PC-3 (cell line): ENCODE measurements at regions of chr3 and their contacts with region 1.

Region 1: DNA sequence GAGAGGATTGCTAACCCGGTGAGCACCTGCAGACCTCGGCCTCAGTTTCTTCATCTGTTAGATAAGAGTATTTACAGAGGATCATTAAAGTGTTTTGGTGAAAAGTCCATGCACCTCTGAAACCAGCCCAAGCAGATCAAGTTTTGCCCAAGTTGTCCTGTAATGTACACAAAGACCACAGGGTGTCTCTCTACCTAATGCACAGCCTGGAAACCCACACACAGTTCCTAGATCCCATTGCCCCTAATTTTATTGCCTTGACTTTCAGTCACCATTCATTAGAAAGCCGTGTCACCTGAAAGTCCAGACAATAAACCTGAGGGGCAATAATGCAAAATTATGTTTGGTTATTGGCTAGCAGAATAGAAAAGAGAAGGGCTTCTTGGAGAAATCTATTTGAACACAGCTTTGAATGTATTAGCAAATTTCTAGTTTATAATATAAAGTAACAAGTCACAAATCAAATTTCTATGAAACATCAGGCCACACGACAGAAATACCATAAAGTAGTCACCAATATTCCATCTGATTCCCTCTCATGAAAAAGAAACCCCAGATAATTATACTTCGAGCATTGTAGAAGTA is 161.3 kb upstream of the SLC2A2 start:
- DNase-seq: peak; percentile 61
- ATAC-seq: peak; percentile 41; the same call in 1 of the 2 replicates
- H3K4me3 ChIP-seq: no peak overlapping the region
- H3K27ac ChIP-seq: no peak overlapping the region
- H3K4me1 ChIP-seq: peaks cover 26% of the 10 kb centered on the region
- H3K27me3 ChIP-seq: no peaks in the 10 kb centered on the region
- CTCF ChIP-seq: peak; percentile 85

Region 2: DNA sequence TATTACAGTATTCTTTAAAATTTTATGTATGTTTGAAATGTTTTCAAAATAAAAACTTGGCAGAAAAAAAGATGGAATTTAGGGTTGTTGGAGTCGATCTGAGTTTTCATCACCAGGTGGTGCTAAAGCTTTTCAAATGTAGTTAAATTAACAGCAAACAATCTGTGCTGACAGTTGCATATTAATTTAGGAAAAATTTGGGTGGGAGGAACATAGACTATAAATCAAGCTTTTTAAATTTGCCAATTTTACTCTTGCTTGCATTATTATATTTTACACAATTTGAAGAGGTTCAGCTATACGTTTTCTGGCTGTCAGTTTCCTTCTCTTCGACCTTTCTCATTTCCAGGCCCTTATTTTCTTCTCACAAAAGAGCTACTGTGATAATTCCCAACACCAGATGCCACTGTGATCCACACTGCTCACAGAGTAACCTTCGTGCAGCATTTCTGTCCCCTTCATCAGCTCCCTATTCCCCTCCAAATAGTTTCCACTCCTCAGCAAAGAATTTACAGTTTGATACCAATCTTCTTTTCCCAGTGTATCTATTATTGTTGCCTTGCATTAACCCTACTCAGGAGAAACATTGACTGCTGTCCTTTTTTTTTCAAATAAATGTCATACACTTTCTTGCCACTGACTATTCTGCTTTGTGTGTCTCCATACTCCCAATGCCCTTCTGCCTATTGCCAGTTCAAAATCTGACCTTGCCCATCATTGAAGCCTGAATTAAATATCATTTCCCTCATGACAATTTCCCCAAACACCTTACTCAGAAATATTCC is 226.0 kb before region 1 on chr3:
- CTCF ChIA-PET with region 1: interaction called, 11 read pairs
- POLR2A ChIA-PET with region 1: no interaction called
- intact Hi-C with region 1: loop called (anchors 1 kb)
- DNase-seq: peak; percentile 74
- ATAC-seq: peak; percentile 55
- H3K4me3 ChIP-seq: no peak overlapping the region
- H3K27ac ChIP-seq: no peak overlapping the region
- H3K4me1 ChIP-seq: no peaks in the 10 kb centered on the region
- H3K27me3 ChIP-seq: no peaks in the 10 kb centered on the region
- CTCF ChIP-seq: peak; percentile 91

Region 3: DNA sequence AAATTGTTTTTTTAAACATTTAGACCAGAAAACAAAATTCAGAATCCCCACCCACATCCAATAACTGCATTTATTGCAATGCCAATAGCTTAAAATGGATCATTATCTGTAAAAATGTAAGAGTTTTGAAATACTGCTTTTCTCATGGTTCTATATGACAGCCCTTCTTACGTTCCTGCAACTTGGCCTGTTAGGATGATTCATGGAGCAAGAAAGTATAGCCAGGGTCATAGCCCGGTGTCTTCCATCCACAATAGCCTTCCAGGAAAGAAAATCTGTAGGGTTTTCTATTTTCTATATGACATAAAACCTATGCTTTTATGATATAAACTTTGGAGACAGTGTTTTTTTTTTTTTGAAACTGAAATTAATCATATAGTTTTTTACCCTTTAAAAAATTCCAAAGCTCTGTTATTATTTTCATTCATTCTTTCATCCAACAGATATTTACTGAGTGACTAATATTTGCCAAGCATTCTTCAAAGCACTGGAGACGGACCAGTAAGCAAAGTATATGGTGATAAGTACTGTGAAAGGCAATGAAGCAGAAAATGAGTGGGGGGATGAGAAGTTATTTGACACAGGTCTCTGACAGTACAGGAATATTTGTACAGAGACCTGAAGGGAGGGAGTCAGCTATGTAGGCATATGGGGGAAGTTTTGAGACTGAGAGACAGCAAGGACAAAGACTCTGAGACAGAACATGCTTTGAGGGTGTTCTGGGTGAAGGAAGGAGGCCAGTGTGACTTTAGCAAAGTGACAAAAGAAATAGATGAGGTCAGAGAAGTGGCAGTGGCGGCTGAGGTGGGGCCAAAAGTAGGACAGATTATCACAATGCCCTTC is 132.2 kb before region 1 on chr3:
- CTCF ChIA-PET with region 1: no interaction called
- POLR2A ChIA-PET with region 1: no interaction called
- intact Hi-C with region 1: loop called (anchors 1 kb)
- DNase-seq: peak; percentile 94
- ATAC-seq: peak; percentile 78
- H3K4me3 ChIP-seq: peak overlapping the region; percentile 18; the same call in 1 of the 2 replicates
- H3K27ac ChIP-seq: peak overlapping the region; percentile 88
- H3K4me1 ChIP-seq: peaks cover 31% of the 10 kb centered on the region
- H3K27me3 ChIP-seq: no peaks in the 10 kb centered on the region
- CTCF ChIP-seq: no peak

Region 4: GRCh38 chr3:171206283-171206682 is 18.5 kb after region 1 on chr3:
- CTCF ChIA-PET with region 1: no interaction called
- POLR2A ChIA-PET with region 1: no interaction called
- intact Hi-C with region 1: no loop called
- DNase-seq: no peak
- ATAC-seq: peak; percentile 46; the same call in 1 of the 2 replicates
- H3K4me3 ChIP-seq: no peak overlapping the region
- H3K27ac ChIP-seq: no peak overlapping the region
- H3K4me1 ChIP-seq: peaks cover 13% of the 10 kb centered on the region
- H3K27me3 ChIP-seq: no peaks in the 10 kb centered on the region
- CTCF ChIP-seq: no peak

Region 5: DNA sequence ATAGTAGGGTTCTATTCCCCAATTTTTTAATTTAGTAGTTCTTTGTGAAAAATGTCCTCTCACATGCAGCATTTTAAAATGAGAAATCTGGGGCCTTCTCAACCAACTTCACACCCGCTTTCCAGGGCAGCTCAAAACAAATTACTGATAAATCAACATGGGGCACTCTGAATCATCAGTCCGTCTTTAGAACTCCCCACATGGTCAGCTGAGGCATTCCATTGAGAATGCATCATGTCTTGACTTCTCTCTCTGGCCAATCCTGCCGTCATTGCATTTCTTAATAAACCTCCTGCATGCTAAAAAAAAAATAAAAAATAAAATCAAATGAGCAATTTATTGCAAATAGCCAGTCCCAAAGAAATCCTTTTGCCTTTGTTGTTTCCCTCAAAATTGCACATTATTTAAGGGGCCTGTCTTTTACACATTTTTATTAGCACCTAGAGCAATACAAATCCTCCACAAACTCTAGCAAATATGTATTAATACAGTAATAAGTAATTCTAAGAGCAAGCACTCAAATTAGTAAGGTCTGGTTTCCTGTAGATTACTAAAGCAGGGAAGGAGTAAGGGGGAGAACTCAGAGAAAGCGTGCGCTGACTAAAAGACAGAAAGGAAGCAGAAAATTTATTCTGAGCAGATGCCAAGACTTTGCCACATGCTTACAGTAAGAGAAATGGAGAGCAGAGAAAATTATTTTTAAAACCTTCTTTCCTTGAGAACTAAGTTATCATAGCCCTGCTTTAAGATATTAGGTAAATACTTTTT is 96.7 kb after region 1 on chr3:
- CTCF ChIA-PET with region 1: no interaction called
- POLR2A ChIA-PET with region 1: no interaction called
- intact Hi-C with region 1: loop called (anchors 5 kb)
- DNase-seq: peak; percentile 76
- ATAC-seq: peak; percentile 92
- H3K4me3 ChIP-seq: no peak overlapping the region
- H3K27ac ChIP-seq: peak overlapping the region; percentile 62
- H3K4me1 ChIP-seq: peaks cover 12% of the 10 kb centered on the region
- H3K27me3 ChIP-seq: no peaks in the 10 kb centered on the region
- CTCF ChIP-seq: no peak

Region 6: DNA sequence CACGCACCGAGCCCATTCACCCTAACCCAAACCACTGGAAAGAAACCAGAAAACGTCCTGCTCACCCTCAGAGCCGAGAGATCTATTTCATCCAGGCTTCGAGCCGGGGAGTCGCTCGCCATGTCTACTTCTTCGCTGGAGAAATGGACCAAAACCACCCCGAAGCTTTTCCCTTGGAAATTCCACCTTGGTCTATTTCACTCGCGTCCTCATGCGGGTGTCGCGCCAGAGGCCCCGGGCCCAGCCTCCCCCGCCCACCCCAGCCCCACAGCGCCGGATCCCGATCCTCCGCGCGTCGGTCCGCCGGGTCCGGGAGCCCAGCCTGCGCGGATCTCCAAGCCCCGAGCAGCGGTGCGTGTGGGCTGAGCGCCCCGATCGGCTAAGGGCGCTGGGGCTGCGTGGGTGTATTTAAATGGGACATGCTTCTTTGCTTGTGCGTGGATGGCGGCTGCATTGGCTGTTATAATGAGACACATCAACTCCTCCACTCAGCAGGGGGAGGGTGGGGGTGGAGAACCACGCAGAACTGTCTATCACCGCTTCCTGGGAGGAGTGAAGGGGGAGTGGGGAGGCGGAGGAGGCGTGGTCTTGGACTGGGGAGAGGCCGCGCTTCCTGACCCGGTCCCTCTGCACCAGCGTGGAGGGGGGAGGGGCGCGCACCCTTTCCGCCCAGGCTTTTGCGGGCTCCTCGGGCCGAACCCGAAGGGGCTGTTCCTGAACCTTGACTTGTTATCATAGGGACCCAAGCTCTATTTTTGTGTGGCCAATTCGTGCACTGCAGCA is 272.3 kb after region 1 on chr3 and contains the start of gene TNIK:
- CTCF ChIA-PET with region 1: interaction called, 3 read pairs
- POLR2A ChIA-PET with region 1: no interaction called
- intact Hi-C with region 1: loop called (anchors 1 kb)
- DNase-seq: peak; percentile 88
- ATAC-seq: peak; percentile 82
- H3K4me3 ChIP-seq: peak within 1 kb of the TSS; percentile 84
- H3K27ac ChIP-seq: peak within 1 kb of the TSS; percentile 62
- H3K4me1 ChIP-seq: peaks cover 30% of the 10 kb centered on the region
- H3K27me3 ChIP-seq: no peaks in the 10 kb centered on the region
- CTCF ChIP-seq: no peak
- total RNA-seq, gene TNIK: 7.0 and 12.0 TPM in 2 replicates

Region 7: GRCh38 chr3:171566803-171567422 is 379.1 kb after region 1 on chr3:
- CTCF ChIA-PET with region 1: interaction called, 3 read pairs
- POLR2A ChIA-PET with region 1: no interaction called
- intact Hi-C with region 1: loop called (anchors 1 kb)
- DNase-seq: peak; percentile 76
- ATAC-seq: peak; percentile 56; the same call in 1 of the 2 replicates
- H3K4me3 ChIP-seq: no peak overlapping the region
- H3K27ac ChIP-seq: no peak overlapping the region
- H3K4me1 ChIP-seq: peaks cover 23% of the 10 kb centered on the region
- H3K27me3 ChIP-seq: no peaks in the 10 kb centered on the region
- CTCF ChIP-seq: peak; percentile 91